Sciatic nerve (tissue), 2 donors: ENCODE measurements at regions of chr11 and their contacts with region 1.

Region 1: DNA sequence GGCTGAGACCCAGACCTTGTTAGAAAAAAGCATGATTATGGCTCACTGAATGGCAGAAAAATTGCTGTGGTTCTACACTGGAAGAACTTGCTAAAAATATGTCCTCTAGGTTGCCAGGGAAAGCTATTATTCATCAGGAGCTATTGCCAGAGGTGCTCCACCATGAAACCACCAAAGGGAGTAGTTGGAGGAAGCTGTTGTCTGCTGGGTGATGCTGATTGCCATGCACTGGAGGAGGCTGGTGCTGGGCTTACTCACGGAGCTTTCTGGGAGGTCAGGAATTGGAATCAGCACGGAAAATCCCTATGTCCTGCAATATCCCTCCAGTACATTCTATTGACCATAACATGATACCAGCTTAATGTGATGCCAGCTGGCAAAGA is 199.6 kb upstream of the ZBED5 start:
- DNase-seq: no peak
- ATAC-seq: no peak

Region 2: DNA sequence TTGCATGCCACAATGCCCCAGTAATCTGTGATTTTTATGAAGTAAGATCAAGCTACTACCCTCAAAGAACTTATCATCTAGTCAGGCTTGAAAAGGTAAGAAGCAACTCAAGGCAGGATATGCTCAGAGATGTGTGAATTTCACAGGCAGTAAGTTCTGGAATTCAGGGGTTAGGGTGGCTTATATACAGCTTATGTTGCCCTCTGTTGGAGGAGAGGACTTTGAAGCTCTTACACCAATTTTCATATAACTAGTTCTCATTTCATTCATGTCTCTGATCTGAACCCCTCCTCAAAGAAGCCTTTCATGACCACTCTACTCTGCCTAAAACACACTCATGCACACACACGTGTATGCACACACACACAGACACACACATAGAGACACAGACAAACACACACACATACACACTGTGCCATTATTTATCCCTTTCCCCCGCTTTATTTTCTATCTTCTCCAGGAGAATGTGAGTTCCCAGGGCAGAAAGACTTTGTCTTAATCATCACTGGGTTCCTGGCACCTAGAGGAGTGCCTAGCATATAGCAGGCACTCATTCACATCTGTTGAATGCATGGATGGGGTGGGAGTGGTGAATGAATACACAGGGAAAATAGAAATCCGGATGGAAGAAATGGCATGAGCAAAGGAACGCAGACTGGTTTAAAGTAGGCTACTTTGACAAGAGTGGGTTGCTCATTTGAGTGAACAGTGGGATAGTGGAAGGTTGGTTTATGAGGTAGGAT is 21.1 kb after region 1 on chr11:
- intact Hi-C with region 1: loop called (anchors 1 kb)
- DNase-seq: no peak
- ATAC-seq: no peak

Region 3: DNA sequence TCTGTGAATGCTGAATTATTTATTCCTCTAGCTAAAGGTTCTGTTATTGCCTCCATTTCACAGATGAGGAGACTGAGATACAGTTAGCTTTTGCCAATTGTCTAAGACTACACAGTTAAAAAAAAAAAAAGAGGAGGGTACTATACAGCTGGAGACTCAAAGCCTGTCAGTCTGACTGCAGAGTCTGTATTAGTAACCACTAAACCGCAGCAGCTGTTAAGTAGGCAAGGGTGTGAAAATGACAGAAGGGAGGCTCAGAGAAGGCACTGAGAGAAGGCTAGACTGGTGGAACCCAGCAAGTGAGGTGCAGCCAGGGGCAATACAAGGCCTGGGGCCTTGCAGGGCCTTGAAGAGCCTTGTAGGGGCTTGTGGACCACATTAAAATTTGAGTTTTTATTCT is 114.4 kb after region 1 on chr11:
- intact Hi-C with region 1: no loop called
- DNase-seq: no peak
- ATAC-seq: no peak